Right lobe of liver (tissue), 6 donors: ENCODE measurements at regions of chr12 and their contacts with region 1.

Region 1: DNA sequence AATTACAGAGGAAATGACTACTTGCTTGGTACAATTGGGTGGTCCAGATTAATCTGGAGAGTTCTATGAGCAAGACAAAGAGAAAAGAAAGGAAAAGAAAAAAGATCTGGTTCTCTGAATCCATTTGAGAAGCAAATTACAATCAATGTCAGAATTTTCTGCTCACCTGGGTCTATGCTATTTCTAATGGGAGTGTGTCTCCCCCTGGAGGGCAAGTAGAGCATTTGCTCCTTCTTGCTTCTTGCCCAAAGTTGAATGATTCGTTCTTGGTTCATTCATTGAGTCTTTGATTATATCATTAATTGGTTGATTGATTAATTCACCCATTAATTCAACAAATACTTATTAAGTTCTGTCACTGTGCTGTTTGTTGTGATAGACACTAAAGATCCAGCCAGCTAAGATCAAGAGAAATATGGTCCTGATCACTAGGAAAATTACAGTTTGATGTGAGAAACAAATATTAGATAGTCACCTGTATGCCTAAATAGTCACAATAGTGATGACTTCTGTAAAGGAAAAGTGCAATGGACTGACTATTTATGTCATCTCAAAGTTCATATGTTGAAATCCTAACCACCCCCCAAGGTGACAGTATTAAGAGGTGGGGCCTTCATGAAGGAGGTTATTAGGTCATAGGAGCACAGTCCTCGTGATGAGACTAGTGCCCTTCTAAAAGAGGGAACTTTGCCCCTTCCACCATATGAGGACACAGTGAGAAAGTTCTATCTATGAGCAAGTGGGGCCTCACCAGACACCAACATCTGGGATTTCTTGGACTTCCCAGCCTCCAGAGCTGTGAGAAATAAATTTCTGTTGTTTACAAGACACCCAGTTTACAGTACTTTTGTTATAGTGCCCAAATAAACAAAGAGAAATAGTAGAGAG is 8.0 kb upstream of the ASB8 start:
- DNase-seq: no peak
- ATAC-seq: peak; percentile 78 to 88 (median 83)
- H3K4me3 ChIP-seq: no peak overlapping the region
- H3K27ac ChIP-seq: no peak overlapping the region
- H3K4me1 ChIP-seq: no peaks in the 10 kb centered on the region
- H3K27me3 ChIP-seq: no peaks in the 10 kb centered on the region
- CTCF ChIP-seq: peak; percentile 91 to 97 (median 94)
- POLR2A ChIP-seq: no peak

Region 2: GRCh38 chr12:48084066-48084465 is 81.3 kb before region 1 on chr12:
- intact Hi-C with region 1: loop called in 1 of 2 experiments (anchors 10 kb)
- DNase-seq: no peak
- ATAC-seq: peak in 1 of 4 donors; percentile 38
- H3K4me3 ChIP-seq: no peak overlapping the region
- H3K27ac ChIP-seq: no peak overlapping the region
- H3K4me1 ChIP-seq: no peaks in the 10 kb centered on the region
- H3K27me3 ChIP-seq: no peaks in the 10 kb centered on the region
- CTCF ChIP-seq: peak; percentile 18 to 37 (median 25)
- POLR2A ChIP-seq: no peak